ENCODE measurements at regions of chr22 and their contacts with region 1.

Region 1: DNA sequence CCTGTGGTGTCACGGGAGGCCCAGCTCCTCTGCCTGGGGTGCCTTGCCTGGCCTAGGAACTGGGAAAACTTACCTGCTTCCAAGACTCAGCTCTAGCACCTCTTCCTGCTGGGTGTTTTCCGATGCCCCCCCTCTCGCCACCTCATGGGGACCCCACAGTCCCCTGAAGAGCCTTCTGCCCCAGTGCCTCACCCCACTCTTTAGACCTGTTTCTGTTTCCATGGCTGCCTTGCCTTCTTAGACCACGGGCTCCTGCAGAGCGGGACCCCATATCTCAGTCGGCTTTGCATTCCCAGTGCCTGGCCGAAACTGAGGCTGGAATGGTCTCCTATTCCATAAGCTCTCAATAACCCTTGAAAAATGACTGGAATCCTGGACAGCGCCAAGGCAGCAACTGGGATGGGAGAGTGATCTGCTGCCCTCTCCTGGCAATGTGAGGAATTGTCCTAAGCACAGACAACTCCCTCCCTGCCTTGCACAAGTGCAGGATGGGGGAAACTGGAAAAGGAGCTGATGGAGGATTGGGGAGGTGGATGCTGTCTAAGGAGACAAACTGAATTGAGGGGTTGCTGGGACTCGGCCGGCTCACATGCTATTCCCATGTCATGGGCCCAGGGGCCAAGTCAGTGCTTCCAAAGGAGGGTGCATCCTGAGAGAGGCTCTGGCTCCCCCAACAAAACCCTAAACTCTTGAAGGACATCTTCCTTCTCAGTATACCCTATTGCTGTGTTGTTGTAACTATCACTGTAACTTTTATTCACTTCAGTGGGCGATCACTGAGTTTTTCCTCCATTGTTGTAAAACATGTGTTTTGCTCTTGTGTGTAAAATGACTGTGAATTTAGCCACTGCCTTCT is 26.6 kb upstream of the IL17RA start:
- DNase-seq: peak in 9 of 10 donors; percentile 39 to 94 (median 75)

Region 2: GRCh38 chr22:16917144-16918003 is 140.8 kb before region 1 on chr22:
- intact Hi-C with region 1: loop called (anchors 5 kb)
- DNase-seq: peak; percentile 28 to 94 (median 77)

Region 3: GRCh38 chr22:16936625-16937024 is 121.6 kb before region 1 on chr22:
- intact Hi-C with region 1: loop called (anchors 1 kb)
- DNase-seq: no peak

Region 4: GRCh38 chr22:16949561-16949960 is 108.6 kb before region 1 on chr22:
- intact Hi-C with region 1: no loop called
- DNase-seq: peak in 1 of 10 donors; percentile 24